Right ventricle myocardium superior (tissue), 1 donor: ENCODE measurements at regions of chr5 and their contacts with region 1.

Region 1: DNA sequence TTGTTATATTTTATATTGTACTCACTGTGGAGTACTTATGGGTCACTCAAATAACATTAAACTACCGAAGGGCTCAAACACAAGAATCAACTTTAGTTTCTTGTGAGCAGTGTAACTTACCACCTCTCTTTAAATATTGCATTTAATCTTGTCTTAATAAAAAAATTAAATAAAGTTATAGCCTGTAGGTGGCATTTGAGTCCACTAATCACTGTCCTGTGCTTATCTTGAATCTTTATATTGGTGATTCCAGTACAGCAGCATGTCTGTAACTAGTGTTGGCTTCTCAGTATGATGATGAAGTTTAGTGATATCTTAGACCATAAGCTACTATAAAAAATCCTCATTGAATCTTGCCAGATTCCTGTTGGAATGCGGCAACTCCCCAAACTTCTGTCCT is 313.8 kb downstream of the FAM170A start:
- DNase-seq: no peak
- ATAC-seq: peak; percentile 64

Region 2: DNA sequence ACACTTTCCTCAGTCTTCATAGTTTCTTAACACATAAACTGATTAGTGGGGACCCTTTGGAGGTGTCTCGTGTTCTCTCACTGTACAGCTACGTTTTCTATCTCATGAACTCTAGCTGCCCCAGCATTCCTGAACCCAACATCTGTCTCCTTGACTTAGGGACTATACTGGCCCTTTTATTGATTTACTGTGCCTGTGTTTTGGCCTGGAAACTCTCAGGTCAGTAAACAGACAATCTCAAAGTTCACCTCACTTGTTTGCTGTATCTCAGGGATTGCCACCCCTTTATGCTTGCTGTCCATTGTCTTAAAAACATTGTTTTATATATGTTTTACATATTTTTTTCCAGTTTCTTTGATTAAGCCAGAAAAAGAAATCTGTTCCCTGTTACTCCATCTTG is 91.0 kb before region 1 on chr5:
- intact Hi-C with region 1: no loop called
- DNase-seq: no peak
- ATAC-seq: no peak

Region 3: DNA sequence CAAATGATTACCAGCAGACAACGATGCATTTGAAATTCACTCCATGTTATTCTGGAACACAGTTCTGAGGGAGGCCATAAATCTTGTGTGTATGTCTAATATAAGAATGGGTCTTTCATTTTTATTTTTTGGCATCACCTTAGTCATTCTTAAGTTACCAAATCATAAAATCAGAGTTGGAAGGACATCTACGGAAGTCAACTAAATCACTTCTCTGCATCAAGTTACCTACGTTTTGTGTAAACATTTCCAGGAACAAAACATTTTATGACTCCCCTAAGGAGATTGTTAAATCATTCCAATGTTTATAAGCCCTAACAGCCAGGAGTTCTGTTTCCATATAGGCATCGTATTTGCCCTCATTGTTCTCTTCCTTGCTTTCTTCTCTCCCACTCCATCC is 64.5 kb after region 1 on chr5:
- intact Hi-C with region 1: no loop called
- DNase-seq: no peak
- ATAC-seq: no peak

Region 4: GRCh38 chr5:120160120-120160895 is 217.2 kb after region 1 on chr5:
- intact Hi-C with region 1: no loop called
- DNase-seq: no peak
- ATAC-seq: no peak

Region 5: GRCh38 chr5:120457839-120458507 is 514.8 kb after region 1 on chr5:
- intact Hi-C with region 1: loop called (anchors 10 kb)
- DNase-seq: peak; percentile 90
- ATAC-seq: peak; percentile 78

Region 6: DNA sequence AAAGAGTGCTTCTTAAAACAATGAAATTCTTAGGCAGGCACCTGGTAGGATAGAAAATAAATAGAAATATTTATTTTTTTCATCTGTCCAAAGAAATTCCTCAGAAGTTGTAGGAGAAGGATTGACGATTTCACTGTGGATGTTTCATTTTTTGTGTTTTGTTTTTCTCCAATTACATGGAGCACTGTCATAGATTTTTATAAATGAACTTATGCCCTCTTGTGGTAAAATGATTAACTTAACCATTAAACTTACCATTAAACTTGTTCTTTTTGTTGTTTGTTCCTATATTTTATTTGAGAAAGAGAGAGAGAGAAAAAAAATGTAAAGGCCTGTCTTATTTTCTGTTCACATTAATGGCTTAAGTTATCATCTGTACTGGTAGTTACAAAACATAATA is 860.1 kb after region 1 on chr5:
- intact Hi-C with region 1: loop called (anchors 10 kb)
- DNase-seq: no peak
- ATAC-seq: no peak